A673 (cell line): ENCODE measurements at regions of chr12 and their contacts with region 1.

Region 1: DNA sequence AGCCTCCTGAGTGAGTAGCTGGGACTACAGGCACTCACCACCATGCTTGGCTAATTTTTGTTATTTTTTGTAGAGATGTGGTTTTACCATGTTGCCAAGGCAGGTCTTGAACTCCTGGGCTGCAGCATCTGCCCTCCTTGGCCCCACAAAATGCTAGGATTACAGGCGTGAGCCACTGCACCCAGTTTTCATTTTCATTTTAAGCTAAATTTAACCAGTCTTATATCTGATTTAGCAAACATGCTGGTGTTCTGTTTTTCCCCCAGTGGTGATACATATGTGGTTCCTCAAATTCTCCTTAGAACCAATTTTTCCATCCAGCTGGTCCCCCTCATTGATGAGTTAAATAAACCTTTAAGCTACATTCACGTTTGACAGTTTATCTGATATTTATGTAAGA is 43.8 kb upstream of the BICD1 start:
- DNase-seq: no peak
- H3K4me3 ChIP-seq: no peak overlapping the region
- H3K27ac ChIP-seq: no peak overlapping the region
- H3K4me1 ChIP-seq: no peaks in the 10 kb centered on the region
- H3K27me3 ChIP-seq: no peaks in the 10 kb centered on the region
- CTCF ChIP-seq: no peak

Region 2: DNA sequence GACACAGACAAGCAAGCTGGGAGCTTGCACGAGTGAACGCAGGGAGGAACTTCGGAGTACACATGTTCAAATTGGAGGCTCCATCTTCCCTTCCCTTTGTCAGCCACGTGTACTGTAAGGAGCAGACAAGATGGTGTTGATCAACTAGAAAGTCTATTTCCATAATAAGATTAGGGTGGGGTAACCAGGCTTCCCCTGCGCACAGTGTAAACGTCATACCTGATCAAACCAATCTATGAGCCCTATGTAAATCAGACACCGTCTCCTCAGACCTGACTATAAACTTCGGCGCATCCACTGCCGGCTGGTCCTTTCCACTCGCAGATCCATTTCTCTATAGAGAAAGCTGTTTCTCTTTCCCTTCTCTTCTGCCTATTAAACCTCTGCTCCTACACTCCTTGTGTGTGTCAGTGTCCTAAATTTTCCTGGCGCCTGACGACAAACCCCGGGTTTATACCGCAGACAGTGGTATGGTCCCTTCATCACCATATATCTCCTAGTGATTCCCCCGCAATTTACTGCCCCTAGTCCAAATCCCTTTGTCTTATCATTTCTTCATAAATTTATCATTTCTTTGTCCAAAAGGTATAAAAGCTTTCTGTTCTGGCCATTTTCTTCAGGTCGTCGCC is 410.9 kb before region 1 on chr12:
- CTCF ChIA-PET with region 1: interaction called, 13 read pairs
- POLR2A ChIA-PET with region 1: no interaction called
- intact Hi-C with region 1: loop called (anchors 2 kb)
- DNase-seq: no peak
- H3K4me3 ChIP-seq: no peak overlapping the region
- H3K27ac ChIP-seq: no peak overlapping the region
- H3K4me1 ChIP-seq: peaks cover 4% of the 10 kb centered on the region
- H3K27me3 ChIP-seq: no peaks in the 10 kb centered on the region
- CTCF ChIP-seq: no peak

Region 3: GRCh38 chr12:31752450-31752849 is 310.4 kb before region 1 on chr12:
- CTCF ChIA-PET with region 1: no interaction called
- POLR2A ChIA-PET with region 1: no interaction called
- intact Hi-C with region 1: no loop called
- DNase-seq: peak; percentile 73
- H3K4me3 ChIP-seq: no peak overlapping the region
- H3K27ac ChIP-seq: peak overlapping the region; percentile 82
- H3K4me1 ChIP-seq: peaks cover 37% of the 10 kb centered on the region
- H3K27me3 ChIP-seq: no peaks in the 10 kb centered on the region
- CTCF ChIP-seq: no peak

Region 4: GRCh38 chr12:31966558-31967205 is 96.2 kb before region 1 on chr12:
- CTCF ChIA-PET with region 1: no interaction called
- POLR2A ChIA-PET with region 1: no interaction called
- intact Hi-C with region 1: no loop called
- DNase-seq: no peak
- H3K4me3 ChIP-seq: no peak overlapping the region
- H3K27ac ChIP-seq: peak overlapping the region; percentile 7
- H3K4me1 ChIP-seq: peaks cover 14% of the 10 kb centered on the region
- H3K27me3 ChIP-seq: no peaks in the 10 kb centered on the region
- CTCF ChIP-seq: no peak

Region 5: GRCh38 chr12:32198555-32198954 is 135.7 kb after region 1 on chr12:
- CTCF ChIA-PET with region 1: no interaction called
- POLR2A ChIA-PET with region 1: no interaction called
- intact Hi-C with region 1: no loop called
- DNase-seq: no peak
- H3K4me3 ChIP-seq: no peak overlapping the region
- H3K27ac ChIP-seq: no peak overlapping the region
- H3K4me1 ChIP-seq: no peaks in the 10 kb centered on the region
- H3K27me3 ChIP-seq: no peaks in the 10 kb centered on the region
- CTCF ChIP-seq: no peak

Region 6: DNA sequence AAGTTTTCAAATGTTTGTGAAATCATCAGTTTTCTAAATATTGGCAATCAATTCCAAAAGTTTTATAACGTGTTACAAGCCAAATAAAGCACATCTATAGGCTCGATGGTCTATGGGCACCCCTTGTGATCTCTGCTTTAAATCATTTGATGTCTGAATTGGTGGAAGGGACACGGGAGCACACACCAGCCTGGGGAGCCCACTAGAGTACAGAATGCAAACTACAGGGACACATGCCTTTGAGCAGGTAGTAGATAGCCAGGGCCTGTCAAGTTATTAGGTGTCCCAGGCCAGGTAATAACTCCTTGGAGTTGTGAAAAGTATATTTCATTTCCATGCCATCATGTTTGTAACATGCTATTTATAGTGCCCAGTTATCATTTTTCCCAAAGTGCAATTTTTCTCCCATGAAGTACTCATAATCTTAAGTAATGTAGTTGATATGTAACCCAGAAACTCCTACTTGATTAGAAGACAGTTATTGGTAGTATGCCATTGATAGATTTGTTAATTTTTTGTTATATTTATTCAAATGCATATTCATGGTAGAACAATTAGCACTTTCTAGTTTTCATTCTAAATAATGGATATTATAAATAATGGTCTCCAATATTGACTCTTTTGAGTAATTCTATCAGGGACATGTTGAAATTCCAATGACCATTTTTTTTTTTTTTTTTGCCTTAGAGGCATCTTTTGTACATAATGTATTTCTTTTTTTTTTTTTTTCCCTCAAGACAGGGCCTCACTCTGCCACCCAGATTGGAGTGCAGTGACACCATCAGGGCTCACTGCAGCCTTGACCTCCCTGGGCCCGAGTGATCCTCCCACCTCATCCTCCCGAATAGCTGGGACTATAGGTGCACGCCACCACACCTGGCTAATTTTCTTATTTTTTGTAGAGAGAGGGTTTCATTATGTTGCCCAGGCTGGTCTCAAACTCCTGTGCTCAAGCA is 239.6 kb after region 1 on chr12:
- CTCF ChIA-PET with region 1: no interaction called
- POLR2A ChIA-PET with region 1: no interaction called
- intact Hi-C with region 1: loop called (anchors 1 kb)
- DNase-seq: peak; percentile 49
- H3K4me3 ChIP-seq: no peak overlapping the region
- H3K27ac ChIP-seq: no peak overlapping the region
- H3K4me1 ChIP-seq: peaks cover 7% of the 10 kb centered on the region
- H3K27me3 ChIP-seq: no peaks in the 10 kb centered on the region
- CTCF ChIP-seq: peak; percentile 59

Region 7: GRCh38 chr12:32312049-32312670 is 249.3 kb after region 1 on chr12:
- CTCF ChIA-PET with region 1: interaction called, 11 read pairs
- POLR2A ChIA-PET with region 1: no interaction called
- intact Hi-C with region 1: no loop called
- DNase-seq: peak; percentile 76
- H3K4me3 ChIP-seq: no peak overlapping the region
- H3K27ac ChIP-seq: no peak overlapping the region
- H3K4me1 ChIP-seq: peaks cover 25% of the 10 kb centered on the region
- H3K27me3 ChIP-seq: no peaks in the 10 kb centered on the region
- CTCF ChIP-seq: peak; percentile 72

Region 8: GRCh38 chr12:32516230-32516629 is 453.3 kb after region 1 on chr12:
- CTCF ChIA-PET with region 1: no interaction called
- POLR2A ChIA-PET with region 1: no interaction called
- intact Hi-C with region 1: no loop called
- DNase-seq: no peak
- H3K4me3 ChIP-seq: no peak overlapping the region
- H3K27ac ChIP-seq: no peak overlapping the region
- H3K4me1 ChIP-seq: peaks cover 12% of the 10 kb centered on the region
- H3K27me3 ChIP-seq: no peaks in the 10 kb centered on the region
- CTCF ChIP-seq: no peak

Region 9: DNA sequence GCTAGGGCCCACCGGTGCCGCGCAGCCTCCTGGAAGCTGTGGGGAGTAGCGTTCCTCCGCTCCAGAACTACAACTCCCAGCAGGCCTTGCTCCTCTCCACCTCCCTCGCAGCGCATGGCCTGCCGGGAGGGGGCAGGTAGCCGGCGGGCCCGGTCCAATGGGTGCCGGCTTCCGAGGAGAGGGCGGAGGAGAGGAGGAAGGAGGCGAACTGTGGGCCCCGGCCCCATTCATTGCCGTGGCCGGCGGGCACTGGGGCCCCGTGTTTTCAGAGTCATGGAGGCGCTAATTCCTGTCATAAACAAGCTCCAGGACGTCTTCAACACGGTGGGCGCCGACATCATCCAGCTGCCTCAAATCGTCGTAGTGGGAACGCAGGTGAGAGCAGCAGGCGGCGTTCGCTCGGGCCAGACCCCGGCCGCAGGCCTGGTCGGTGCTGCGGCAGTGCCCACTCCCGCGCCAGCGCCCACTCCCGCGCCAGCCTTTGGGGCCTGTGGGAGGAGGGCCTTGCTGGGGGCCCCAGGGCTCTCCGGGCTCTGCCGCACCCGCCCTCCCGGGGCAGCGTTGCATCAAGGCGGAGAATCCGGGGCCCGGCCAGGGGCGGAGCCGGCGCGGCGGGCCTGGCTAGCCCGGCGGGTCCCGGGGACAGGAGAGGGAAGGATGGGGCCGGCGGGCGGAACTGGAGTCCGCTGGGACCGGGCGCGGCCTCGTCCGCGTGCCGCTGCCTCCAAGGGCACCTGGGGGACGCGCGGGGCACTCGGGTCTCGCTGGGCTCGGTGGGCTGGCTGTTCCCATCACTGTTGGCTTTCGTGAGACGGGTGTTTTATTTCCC is 616.4 kb after region 1 on chr12 and contains the start of gene DNM1L:
- CTCF ChIA-PET with region 1: no interaction called
- POLR2A ChIA-PET with region 1: no interaction called
- intact Hi-C with region 1: loop called (anchors 10 kb)
- DNase-seq: peak; percentile 98
- H3K4me3 ChIP-seq: peak within 1 kb of the TSS; percentile 86
- H3K27ac ChIP-seq: peak within 1 kb of the TSS; percentile 90
- H3K4me1 ChIP-seq: peaks cover 10% of the 10 kb centered on the region
- H3K27me3 ChIP-seq: no peaks in the 10 kb centered on the region
- CTCF ChIP-seq: no peak
- total RNA-seq, gene DNM1L: 102 and 121 TPM in 2 replicates